WTC11 (cell line): ENCODE measurements at regions of chr5 and their contacts with region 1.

Region 1: DNA sequence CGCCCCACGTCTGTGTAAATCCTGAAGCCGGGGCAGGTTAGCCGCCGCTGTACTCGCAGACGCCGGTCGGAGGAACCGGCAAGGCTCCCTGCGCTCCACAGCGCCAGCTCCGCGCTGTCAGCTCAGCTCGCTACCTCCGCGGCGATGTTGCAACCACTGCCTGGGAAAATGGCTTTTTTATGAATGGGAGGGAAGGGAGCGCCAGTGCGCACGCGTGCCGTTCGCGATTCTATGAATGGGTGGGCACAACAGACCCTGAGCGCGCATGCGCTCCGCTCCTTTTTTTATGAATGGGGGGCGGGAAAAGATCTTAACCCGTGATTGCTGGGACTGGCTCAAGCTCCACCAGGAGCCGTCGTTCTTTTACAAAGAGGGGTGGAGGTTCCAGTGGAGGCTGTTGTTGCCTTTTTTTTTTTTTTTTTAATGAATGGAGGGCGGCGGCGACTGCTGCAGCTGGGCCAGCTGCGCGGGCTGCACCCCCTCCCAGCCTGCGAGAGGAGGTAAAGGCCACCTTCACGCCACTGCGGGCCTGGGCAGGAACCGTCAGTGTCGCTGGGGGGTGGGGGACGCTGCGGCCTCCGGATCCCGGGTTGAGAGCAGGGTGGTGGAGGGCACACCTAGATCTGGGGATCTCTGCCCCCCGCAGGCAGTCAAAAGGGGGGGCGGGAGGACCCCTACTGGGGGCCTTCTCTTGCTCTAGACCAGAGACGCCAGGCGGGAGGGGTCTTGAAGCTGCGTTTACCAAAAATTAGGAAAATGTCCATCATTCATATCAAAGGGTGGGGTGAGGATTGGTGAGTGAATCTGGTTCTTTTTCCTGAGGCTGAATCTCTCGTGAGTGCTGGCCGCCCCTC is at the start of gene SPRY4:
- DNase-seq: peak; percentile 95
- ATAC-seq: peak; percentile 25
- H3K4me3 Mint-ChIP-seq: peak within 1 kb of the TSS; percentile 96
- H3K27ac Mint-ChIP-seq: peak within 1 kb of the TSS; percentile 93
- H3K4me1 Mint-ChIP-seq: peaks cover 62% of the 10 kb centered on the region
- H3K27me3 Mint-ChIP-seq: no peaks in the 10 kb centered on the region; the same call in 1 of the 2 replicates
- CTCF ChIP-seq: no peak
- total RNA-seq, gene SPRY4: 99.6 to 140 TPM (median 103 TPM) in 3 replicates

Region 2: GRCh38 chr5:142356716-142357473 is 31.8 kb after region 1 on chr5:
- CTCF ChIA-PET with region 1: interaction called, 19 read pairs
- POLR2A ChIA-PET with region 1: interaction called, 83 read pairs
- DNase-seq: peak; percentile 86
- ATAC-seq: peak; percentile 76
- H3K4me3 Mint-ChIP-seq: peak overlapping the region; percentile 64
- H3K27ac Mint-ChIP-seq: peak overlapping the region; percentile 99
- H3K4me1 Mint-ChIP-seq: peaks cover 57% of the 10 kb centered on the region
- H3K27me3 Mint-ChIP-seq: no peaks in the 10 kb centered on the region
- CTCF ChIP-seq: no peak

Region 3: DNA sequence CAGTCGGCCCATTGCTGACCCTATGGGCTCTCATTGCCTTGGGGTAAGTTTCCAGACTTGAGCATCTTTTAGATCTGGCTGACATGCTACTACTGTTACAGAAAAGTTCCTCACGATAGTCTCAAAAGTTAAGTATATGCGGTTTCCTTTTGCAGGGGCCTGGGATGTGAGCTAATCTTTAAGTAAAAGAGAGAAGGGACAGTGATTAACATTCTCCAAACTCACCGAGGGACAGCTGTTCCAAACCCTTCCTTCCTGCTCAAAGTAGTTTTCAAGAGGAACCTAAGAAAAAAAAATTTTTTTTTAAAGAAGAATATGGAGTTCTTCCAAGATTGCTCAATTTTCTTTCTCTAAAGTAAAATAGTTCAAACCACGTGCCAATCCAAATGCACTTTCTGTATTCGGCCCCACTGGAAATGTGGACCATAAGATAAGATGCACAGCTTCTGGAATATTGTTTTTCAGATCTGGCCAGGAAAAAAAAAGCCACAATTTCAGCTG is 167.7 kb after region 1 on chr5:
- CTCF ChIA-PET with region 1: interaction called, 3 read pairs
- POLR2A ChIA-PET with region 1: interaction called, 10 read pairs
- DNase-seq: no peak
- ATAC-seq: no peak
- H3K4me3 Mint-ChIP-seq: no peak overlapping the region
- H3K27ac Mint-ChIP-seq: peak overlapping the region; percentile 31; the same call in 1 of the 2 replicates
- H3K4me1 Mint-ChIP-seq: peaks cover 26% of the 10 kb centered on the region
- H3K27me3 Mint-ChIP-seq: no peaks in the 10 kb centered on the region
- CTCF ChIP-seq: no peak